ENCODE measurements at regions of chr1 and their contacts with region 1.

Region 1: GRCh38 chr1:32215629-32216480 is 6.3 kb downstream of the TMEM234 start:
- DNase-seq: peak; percentile 69
- ATAC-seq: peak; percentile 97
- H3K4me3 Mint-ChIP-seq: no peak overlapping the region
- H3K27ac Mint-ChIP-seq: no peak overlapping the region
- H3K4me1 Mint-ChIP-seq: peaks cover 11% of the 10 kb centered on the region
- H3K27me3 Mint-ChIP-seq: no peaks in the 10 kb centered on the region
- CTCF ChIP-seq: peak; percentile 91

Region 2: DNA sequence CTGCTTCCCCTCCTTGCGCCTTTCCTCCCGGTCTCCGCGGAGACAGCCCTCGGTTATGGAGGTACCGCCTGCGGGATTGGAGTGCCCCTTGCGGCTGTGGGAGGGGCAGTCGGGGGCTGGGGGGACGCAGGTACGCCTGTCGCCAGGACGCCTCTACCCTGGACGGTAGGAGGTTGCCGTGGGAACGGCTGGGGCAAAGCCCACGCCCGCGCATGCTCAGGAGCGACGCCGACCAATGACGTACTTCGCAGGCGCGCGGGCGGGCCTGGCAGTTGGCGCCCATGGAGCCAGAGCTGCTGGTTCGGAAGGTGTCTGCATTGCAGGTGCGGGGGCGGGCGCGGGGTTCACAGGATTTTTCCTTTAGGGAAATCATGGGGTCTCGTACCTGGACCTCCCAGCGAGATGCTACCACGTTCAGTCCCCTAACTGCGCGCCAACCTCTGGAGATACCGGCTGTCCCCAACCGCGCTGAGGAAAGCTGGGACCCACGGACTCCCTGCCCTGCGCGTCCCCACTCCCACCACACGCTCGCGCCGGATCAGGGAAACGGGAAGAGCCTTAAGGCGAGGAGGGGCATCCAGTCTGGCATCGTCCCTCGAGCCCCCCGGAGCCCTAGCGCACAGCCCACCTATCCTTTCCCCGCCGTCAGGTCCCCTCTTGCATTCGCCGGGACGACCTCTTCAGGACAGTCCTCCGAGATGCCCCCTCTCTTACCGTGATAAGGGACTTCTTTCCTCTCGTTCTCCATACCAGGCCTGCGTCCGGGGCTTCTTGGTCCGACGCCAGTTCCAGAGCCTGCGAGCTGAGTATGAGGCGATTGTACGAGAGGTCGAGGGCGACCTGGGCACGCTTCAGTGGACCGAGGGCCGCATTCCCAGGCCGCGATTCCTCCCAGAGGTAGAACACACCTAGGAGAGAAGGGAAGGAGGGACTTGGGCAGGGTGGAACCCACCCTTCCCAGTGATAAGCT is 10.2 kb before region 1 on chr1 and contains the start of gene IQCC:
- CTCF ChIA-PET with region 1: interaction called, 44 read pairs
- POLR2A ChIA-PET with region 1: interaction called, 9 read pairs
- intact Hi-C with region 1: no loop called
- DNase-seq: peak; percentile 91
- ATAC-seq: peak; percentile 68
- H3K4me3 Mint-ChIP-seq: peak within 1 kb of the TSS; percentile 90
- H3K27ac Mint-ChIP-seq: peak within 1 kb of the TSS; percentile 86
- H3K4me1 Mint-ChIP-seq: peaks cover 26% of the 10 kb centered on the region
- H3K27me3 Mint-ChIP-seq: no peaks in the 10 kb centered on the region
- CTCF ChIP-seq: no peak
- total RNA-seq, gene IQCC: 4.2 to 4.4 TPM

Region 3: GRCh38 chr1:32240140-32240951 is 24.5 kb after region 1 on chr1:
- CTCF ChIA-PET with region 1: interaction called, 28 read pairs
- POLR2A ChIA-PET with region 1: interaction called, 6 read pairs
- intact Hi-C with region 1: no loop called
- DNase-seq: peak; percentile 67
- ATAC-seq: peak; percentile 65
- H3K4me3 Mint-ChIP-seq: peak overlapping the region; percentile 80
- H3K27ac Mint-ChIP-seq: peak overlapping the region; percentile 59
- H3K4me1 Mint-ChIP-seq: peaks cover 17% of the 10 kb centered on the region
- H3K27me3 Mint-ChIP-seq: no peaks in the 10 kb centered on the region
- CTCF ChIP-seq: peak; percentile 33

Region 4: DNA sequence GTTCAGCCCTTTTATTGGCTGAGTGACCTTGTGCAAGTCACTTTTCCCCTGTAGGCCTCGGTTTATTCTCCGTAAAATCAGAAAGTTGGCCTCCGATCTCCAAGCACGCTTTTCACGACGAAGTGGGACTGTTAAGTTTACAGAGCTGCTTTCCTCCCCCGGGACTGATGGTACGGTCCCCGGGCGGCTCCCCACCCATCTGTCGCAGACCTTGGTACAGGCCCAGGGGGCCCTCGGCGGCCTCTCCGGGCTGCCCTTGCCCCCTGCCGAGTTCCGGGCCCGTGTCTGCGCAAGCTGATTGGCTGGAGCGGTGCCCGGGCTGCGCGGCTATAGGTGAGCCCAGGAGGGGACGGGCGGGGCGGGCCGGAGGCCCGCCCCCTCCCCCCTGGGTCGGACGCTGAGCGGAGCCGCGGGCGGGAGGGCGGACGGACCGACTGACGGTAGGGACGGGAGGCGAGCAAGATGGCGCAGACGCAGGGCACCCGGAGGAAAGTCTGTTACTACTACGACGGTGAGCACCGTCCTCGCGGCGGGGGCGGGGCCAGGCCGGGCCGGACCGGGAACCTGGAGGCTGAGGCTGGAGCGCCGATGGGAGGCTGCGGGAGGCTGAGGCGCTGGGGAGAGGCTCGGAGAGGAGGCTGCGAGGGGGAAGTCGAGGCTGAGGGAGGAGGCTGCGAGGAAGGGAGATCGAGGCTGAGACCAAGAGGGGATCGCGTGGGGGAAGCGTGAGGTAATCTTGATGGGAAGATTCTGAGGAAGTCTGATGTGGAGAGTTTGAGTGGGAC is 76.0 kb after region 1 on chr1 and contains the start of gene HDAC1:
- CTCF ChIA-PET with region 1: interaction called, 14 read pairs
- POLR2A ChIA-PET with region 1: interaction called, 4 read pairs
- intact Hi-C with region 1: no loop called
- DNase-seq: peak; percentile 98
- ATAC-seq: peak; percentile 98
- H3K4me3 Mint-ChIP-seq: peak within 1 kb of the TSS; percentile 98
- H3K27ac Mint-ChIP-seq: peak within 1 kb of the TSS; percentile 97
- H3K4me1 Mint-ChIP-seq: peaks cover 41% of the 10 kb centered on the region
- H3K27me3 Mint-ChIP-seq: no peaks in the 10 kb centered on the region
- CTCF ChIP-seq: no peak
- total RNA-seq, gene HDAC1: 126 to 127 TPM

Region 5: GRCh38 chr1:32321712-32322291 is 105.9 kb after region 1 on chr1:
- CTCF ChIA-PET with region 1: interaction called, 21 read pairs
- POLR2A ChIA-PET with region 1: no interaction called
- intact Hi-C with region 1: no loop called
- DNase-seq: peak; percentile 32
- ATAC-seq: peak; percentile 65
- H3K4me3 Mint-ChIP-seq: peak overlapping the region; percentile 0
- H3K27ac Mint-ChIP-seq: peak overlapping the region; percentile 81
- H3K4me1 Mint-ChIP-seq: peaks cover 40% of the 10 kb centered on the region
- H3K27me3 Mint-ChIP-seq: no peaks in the 10 kb centered on the region
- CTCF ChIP-seq: no peak

Region 6: DNA sequence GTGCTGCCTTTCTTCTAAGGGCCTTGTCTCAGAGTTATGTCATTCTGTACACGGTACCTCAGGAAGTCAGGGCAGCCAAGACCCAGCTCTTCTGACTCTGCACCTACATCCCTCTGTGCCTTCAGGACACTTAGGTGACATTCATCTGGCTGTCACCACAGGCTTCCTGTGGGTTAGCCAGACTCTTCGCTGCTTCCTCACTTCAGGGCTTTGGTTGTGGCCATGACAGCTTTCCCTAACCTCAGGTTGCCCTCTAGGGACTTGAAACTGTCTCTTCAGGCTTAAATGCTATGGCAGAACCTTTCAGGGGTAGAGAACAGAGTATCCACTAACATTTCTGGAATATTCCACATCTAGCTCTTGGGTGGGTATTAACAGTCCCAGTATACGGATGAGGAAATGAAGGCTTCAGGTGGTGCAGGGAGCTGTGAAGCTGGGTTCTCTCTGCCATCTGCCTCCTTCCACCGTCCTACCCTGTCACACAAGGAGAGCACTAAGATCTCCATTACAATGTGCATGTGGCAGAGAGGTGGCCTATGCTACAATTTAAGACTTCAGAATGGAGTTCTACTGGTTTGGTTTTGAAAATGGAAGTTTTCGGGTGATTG is 156.4 kb after region 1 on chr1:
- CTCF ChIA-PET with region 1: interaction called, 21 read pairs
- POLR2A ChIA-PET with region 1: interaction called, 4 read pairs
- intact Hi-C with region 1: no loop called
- DNase-seq: peak; percentile 55
- ATAC-seq: peak; percentile 82
- H3K4me3 Mint-ChIP-seq: no peak overlapping the region
- H3K27ac Mint-ChIP-seq: peak overlapping the region; percentile 3
- H3K4me1 Mint-ChIP-seq: peaks cover 15% of the 10 kb centered on the region
- H3K27me3 Mint-ChIP-seq: no peaks in the 10 kb centered on the region
- CTCF ChIP-seq: no peak

Region 7: GRCh38 chr1:32413507-32414185 is 197.8 kb after region 1 on chr1:
- CTCF ChIA-PET with region 1: interaction called, 16 read pairs
- POLR2A ChIA-PET with region 1: no interaction called
- intact Hi-C with region 1: no loop called
- DNase-seq: peak; percentile 85
- ATAC-seq: peak; percentile 79
- H3K4me3 Mint-ChIP-seq: no peak overlapping the region
- H3K27ac Mint-ChIP-seq: no peak overlapping the region
- H3K4me1 Mint-ChIP-seq: peaks cover 3% of the 10 kb centered on the region
- H3K27me3 Mint-ChIP-seq: peaks cover 4% of the 10 kb centered on the region
- CTCF ChIP-seq: peak; percentile 87